ENCODE measurements at regions of chr3 and their contacts with region 1.

Region 1: GRCh38 chr3:157159762-157160657 is at the start of gene CCNL1:
- DNase-seq: peak; percentile 96
- ATAC-seq: peak; percentile 89
- H3K4me3 ChIP-seq: peak within 1 kb of the TSS; percentile 81 to 88
- H3K27ac ChIP-seq: peak within 1 kb of the TSS; percentile 80
- H3K4me1 ChIP-seq: peaks cover 11 to 21% of the 10 kb centered on the region in 2 experiments
- H3K27me3 ChIP-seq: no peaks in the 10 kb centered on the region
- CTCF ChIP-seq: no peak
- POLR2A ChIP-seq: peak; percentile 99
- RAD21 ChIP-seq: no peak
- total RNA-seq, gene CCNL1: 96.7 TPM

Region 2: DNA sequence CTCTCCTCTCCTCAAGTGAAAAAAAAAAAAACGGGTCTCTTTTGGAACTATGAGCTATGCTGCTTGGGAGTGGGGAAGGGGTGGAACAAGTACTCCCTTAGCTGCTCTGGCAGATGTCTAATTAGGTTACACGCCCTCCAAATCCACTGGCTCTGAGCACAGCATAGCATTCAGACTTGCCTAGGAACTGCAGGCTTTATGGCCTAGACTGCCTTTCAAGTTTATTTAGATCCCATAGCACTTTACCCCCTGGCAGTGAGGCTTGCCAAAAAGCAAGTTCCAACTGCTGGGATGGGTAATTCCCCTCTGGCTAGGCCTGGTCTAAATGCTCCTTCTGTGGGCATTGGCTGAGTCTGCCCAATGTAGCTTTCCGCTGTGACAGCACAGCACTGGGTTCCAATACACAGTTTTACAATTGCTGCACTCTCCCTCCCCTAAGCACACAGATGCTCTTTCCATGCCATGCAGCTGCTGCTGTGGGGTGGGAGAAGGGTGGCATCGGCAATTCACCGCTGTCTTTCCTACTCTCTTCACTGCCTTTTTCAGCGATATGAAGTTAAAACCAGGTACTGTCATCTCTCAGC is 886.8 kb before region 1 on chr3:
- CTCF ChIA-PET with region 1: no interaction called
- POLR2A ChIA-PET with region 1: no interaction called
- RAD21 ChIA-PET with region 1: no interaction called
- intact Hi-C with region 1: no loop called
- DNase-seq: no peak
- ATAC-seq: no peak
- H3K4me3 ChIP-seq: no peak overlapping the region
- H3K27ac ChIP-seq: no peak overlapping the region
- H3K4me1 ChIP-seq: no peaks in the 10 kb centered on the region
- H3K27me3 ChIP-seq: no peaks in the 10 kb centered on the region
- CTCF ChIP-seq: no peak
- POLR2A ChIP-seq: no peak
- RAD21 ChIP-seq: no peak

Region 3: DNA sequence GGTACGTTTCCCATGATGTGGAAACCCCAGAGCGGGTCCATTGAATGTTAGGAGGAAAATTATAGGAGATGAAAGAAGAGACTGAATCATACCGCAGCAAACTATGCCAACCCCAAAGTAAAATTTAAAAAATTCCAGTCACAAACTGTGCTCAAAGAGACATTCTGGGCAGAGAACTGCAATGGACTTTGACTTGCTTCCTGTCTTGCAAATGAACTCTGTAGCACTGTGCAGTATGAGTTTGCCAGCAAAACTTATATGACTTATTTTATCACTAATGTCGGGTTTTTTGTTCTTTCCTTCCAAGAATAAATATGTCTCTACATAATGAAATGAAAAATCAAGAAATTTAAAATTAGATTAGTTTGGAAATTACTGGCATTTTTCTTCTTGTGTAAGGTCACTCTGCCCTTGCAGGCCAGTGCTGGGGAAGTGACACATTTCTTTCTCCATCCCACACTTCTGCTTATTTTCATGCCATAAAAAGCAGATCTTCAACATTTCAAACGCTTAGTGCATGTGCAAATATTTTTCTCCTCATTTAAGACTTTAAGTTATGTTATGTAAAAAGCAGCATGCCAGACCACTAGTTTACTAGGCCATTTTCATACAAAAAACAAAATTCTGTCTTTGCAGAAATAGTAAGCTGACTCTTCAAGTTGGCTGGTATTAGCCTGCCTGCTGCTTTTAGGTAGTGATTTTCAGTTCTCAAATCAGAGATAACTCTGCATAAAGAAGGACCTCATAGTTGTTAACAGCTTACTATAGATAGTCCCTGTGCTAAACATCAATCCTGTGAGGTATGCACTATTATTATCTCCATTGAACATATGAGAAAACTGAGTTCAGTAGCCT is 572.9 kb before region 1 on chr3:
- CTCF ChIA-PET with region 1: no interaction called
- POLR2A ChIA-PET with region 1: no interaction called
- RAD21 ChIA-PET with region 1: no interaction called
- intact Hi-C with region 1: no loop called
- DNase-seq: no peak
- ATAC-seq: no peak
- H3K4me3 ChIP-seq: no peak overlapping the region
- H3K27ac ChIP-seq: no peak overlapping the region
- H3K4me1 ChIP-seq: no peaks in the 10 kb centered on the region
- H3K27me3 ChIP-seq: no peaks in the 10 kb centered on the region
- CTCF ChIP-seq: no peak
- POLR2A ChIP-seq: no peak
- RAD21 ChIP-seq: no peak

Region 4: DNA sequence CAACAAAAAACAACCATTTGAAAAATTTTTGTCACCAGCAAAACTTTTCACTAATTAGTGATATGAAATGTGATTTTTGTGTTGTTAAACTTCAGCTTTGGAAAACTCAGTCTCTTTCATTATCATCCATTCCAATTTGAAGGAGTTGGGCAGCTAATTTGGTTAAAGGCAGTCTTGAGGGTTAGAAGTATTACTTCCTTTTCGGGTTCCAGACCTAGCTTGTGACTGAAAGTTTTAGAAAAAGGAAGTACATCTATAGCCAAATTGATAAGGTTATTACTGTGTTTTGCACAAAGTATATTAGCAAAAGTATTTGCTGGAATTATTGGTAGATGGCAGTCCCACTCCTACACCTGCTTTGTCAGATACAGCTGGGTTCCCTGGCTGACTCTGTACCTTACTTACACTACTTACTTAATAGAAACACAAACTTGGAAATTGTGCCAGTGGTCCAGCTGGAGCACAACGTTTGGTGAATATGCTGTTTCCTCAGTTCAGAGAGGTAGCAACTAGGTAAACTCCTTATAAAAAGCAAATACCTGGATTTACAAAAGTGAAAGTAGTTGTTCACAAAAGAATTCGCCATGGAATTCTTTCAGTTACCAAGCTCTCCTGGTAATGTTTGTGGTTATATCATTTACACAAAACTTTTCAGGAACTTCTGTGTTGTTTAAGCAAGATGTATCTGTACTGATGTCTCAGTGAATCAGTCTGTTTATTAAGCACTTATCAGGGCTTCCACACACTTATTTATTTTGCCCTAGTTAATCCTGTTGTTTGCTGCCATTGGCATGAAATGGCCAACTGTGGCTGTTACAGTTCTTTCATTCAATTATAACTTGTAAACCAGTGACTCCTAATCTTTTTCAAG is 454.0 kb before region 1 on chr3:
- CTCF ChIA-PET with region 1: no interaction called
- POLR2A ChIA-PET with region 1: no interaction called
- RAD21 ChIA-PET with region 1: no interaction called
- intact Hi-C with region 1: no loop called
- DNase-seq: no peak
- ATAC-seq: no peak
- H3K4me3 ChIP-seq: no peak overlapping the region
- H3K27ac ChIP-seq: no peak overlapping the region
- H3K4me1 ChIP-seq: peaks cover 0 to 5% of the 10 kb centered on the region in 2 experiments; a peak in 1 of 4 replicates
- H3K27me3 ChIP-seq: no peaks in the 10 kb centered on the region
- CTCF ChIP-seq: no peak
- POLR2A ChIP-seq: no peak
- RAD21 ChIP-seq: no peak

Region 5: GRCh38 chr3:157174649-157175498 is 14.9 kb after region 1 on chr3:
- CTCF ChIA-PET with region 1: interaction called, 17 read pairs
- POLR2A ChIA-PET with region 1: interaction called, 128 read pairs
- RAD21 ChIA-PET with region 1: interaction called in 1 of 2 experiments, 3 read pairs
- intact Hi-C with region 1: loop called (anchors 1 kb)
- DNase-seq: peak; percentile 99
- ATAC-seq: peak; percentile 91
- H3K4me3 ChIP-seq: peak overlapping the region; percentile 81 to 89
- H3K27ac ChIP-seq: peak overlapping the region; percentile 89
- H3K4me1 ChIP-seq: peaks cover 5 to 17% of the 10 kb centered on the region in 2 experiments; a peak in 3 of 4 replicates
- H3K27me3 ChIP-seq: no peaks in the 10 kb centered on the region
- CTCF ChIP-seq: no peak
- POLR2A ChIP-seq: peak; percentile 88
- RAD21 ChIP-seq: no peak

Region 6: DNA sequence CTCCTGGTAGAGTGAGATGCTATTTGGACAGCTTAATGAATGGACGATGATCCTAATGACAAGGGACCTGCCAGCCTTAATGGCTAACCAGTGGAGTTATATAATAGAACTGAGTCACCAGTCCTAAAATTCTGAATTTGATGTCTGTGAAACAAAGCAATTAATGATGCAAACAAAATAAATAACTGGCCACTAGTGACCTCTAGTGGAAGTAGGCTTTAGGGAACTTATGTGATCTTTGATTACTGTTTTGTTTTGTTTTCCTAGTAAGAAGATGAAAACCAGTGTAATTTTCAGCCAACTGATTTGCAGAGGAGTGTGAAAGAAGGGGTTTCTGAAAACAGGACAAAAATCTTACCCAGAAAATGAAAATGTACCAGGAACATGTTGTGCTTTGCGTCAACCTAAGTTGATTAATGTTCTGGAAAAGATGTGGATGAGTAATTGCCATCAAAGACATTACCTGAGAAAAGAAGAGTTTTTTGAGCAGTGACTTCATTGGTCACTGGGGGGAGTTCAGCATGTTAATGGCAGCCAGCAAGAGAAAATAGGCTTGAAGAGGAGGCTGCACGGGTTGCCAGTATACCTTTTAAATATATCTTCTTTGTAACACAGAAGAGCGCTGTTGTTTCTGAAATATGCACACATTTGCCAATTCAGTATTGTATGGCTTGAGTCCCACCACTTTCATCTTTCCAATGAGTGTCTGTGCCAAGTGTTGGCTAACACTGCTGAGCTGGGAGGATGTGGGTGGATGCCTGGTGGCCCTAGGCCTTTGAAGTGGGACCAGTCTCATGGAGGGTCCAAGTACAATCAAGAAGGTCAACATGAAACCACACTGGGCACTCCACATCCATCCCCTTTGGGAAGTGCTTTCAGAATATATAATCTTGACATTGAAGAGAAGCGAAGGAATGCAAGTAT is 333.9 kb after region 1 on chr3:
- CTCF ChIA-PET with region 1: interaction called, 3 read pairs
- POLR2A ChIA-PET with region 1: no interaction called
- RAD21 ChIA-PET with region 1: no interaction called
- intact Hi-C with region 1: loop called (anchors 2 kb)
- DNase-seq: peak; percentile 44
- ATAC-seq: peak; percentile 69
- H3K4me3 ChIP-seq: no peak overlapping the region
- H3K27ac ChIP-seq: no peak overlapping the region
- H3K4me1 ChIP-seq: peaks cover 1 to 5% of the 10 kb centered on the region in 2 experiments; a peak in 3 of 4 replicates
- H3K27me3 ChIP-seq: no peaks in the 10 kb centered on the region
- CTCF ChIP-seq: peak; percentile 61 to 77 (median 67)
- POLR2A ChIP-seq: no peak
- RAD21 ChIP-seq: peak; percentile 78

Measured in HCT116 (cell line).